MCF 10A (cell line): ENCODE measurements at regions of chr2 and their contacts with region 1.

Region 1: DNA sequence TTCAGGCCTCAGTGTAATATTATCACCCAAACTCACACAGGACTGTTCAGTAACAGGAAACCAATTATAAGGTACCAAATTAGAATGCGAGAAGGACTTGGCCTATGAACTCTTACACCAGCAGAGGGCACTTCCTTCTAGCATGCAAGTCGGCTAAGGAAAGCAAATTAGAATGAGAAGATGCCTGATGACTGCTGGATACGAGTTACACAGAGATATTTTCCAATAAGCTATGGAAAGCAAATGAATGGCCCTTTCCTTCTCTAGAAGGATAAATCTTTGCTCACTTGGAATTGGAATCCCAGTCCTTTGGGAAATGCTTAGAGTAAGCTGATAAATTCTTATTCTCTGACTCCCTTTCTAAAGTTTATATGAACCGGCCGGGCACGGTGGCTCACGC is 109.8 kb downstream of the AP1S3 start:
- DNase-seq: peak; percentile 80
- H3K4me3 Mint-ChIP-seq: no peak overlapping the region
- H3K27ac Mint-ChIP-seq: no peak overlapping the region
- H3K4me1 Mint-ChIP-seq: peaks cover 24% of the 10 kb centered on the region
- H3K27me3 Mint-ChIP-seq: no peaks in the 10 kb centered on the region
- CTCF ChIP-seq: peak; percentile 42

Region 2: DNA sequence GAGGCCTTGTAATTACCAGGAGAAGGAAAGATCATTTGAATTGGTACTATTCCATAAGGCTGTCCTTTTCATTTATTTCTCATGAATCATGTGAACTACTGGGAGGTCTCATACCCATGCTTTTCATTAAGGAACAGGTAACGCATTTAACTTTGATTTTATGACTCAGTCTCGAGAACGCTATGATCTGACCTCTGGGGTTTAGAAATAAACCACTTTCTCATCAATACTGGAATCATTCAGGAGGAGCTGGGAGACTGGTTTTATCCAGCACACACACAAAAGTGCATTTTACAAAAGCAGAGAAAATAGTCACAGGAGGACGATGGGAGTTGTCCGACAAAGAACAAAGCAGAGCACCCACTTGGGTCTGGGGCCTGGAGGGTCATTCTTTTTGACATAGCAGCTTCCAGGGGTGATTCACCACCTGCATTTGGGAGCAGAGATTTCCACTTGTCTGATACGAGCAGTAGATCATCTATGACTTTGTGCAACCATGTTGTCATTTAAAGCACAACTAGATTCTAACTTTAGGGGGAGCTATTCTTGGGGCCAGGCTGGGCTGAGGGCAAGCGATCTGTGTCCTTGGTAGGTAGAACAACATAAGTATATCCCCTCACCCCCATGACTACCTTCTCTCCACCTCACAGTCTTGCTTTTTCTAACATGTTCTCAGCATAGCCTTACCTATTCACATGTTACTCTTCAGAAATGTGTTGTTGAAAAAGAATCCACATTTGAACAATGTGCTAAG is 29.5 kb before region 1 on chr2:
- CTCF ChIA-PET with region 1: interaction called, 7 read pairs
- POLR2A ChIA-PET with region 1: interaction called, 10 read pairs
- intact Hi-C with region 1: no loop called
- DNase-seq: peak; percentile 79
- H3K4me3 Mint-ChIP-seq: peak overlapping the region; percentile 40
- H3K27ac Mint-ChIP-seq: peak overlapping the region; percentile 99
- H3K4me1 Mint-ChIP-seq: peaks cover 43% of the 10 kb centered on the region
- H3K27me3 Mint-ChIP-seq: no peaks in the 10 kb centered on the region
- CTCF ChIP-seq: peak; percentile 22

Region 3: GRCh38 chr2:225402210-225402776 is 1674.7 kb after region 1 on chr2:
- CTCF ChIA-PET with region 1: no interaction called
- POLR2A ChIA-PET with region 1: no interaction called
- intact Hi-C with region 1: no loop called
- DNase-seq: no peak
- H3K4me3 Mint-ChIP-seq: no peak overlapping the region
- H3K27ac Mint-ChIP-seq: no peak overlapping the region
- H3K4me1 Mint-ChIP-seq: no peaks in the 10 kb centered on the region
- H3K27me3 Mint-ChIP-seq: peaks cover 56% of the 10 kb centered on the region
- CTCF ChIP-seq: no peak